ENCODE measurements at regions of chr18 and their contacts with region 1.

Region 1: GRCh38 chr18:43581936-43582519 is 304.7 kb upstream of the SYT4 start:
- DNase-seq: no peak
- H3K4me3 ChIP-seq: no peak overlapping the region
- H3K27me3 ChIP-seq: no peaks in the 10 kb centered on the region
- CTCF ChIP-seq: no peak

Region 2: GRCh38 chr18:43571078-43571689 is 10.8 kb before region 1 on chr18:
- CTCF ChIA-PET with region 1: interaction called, 226 read pairs
- POLR2A ChIA-PET with region 1: no interaction called
- DNase-seq: peak; percentile 4
- H3K4me3 ChIP-seq: no peak overlapping the region
- H3K27me3 ChIP-seq: no peaks in the 10 kb centered on the region
- CTCF ChIP-seq: peak; percentile 69